MCF 10A (cell line): ENCODE measurements at regions of chr15 and their contacts with region 1.

Region 1: DNA sequence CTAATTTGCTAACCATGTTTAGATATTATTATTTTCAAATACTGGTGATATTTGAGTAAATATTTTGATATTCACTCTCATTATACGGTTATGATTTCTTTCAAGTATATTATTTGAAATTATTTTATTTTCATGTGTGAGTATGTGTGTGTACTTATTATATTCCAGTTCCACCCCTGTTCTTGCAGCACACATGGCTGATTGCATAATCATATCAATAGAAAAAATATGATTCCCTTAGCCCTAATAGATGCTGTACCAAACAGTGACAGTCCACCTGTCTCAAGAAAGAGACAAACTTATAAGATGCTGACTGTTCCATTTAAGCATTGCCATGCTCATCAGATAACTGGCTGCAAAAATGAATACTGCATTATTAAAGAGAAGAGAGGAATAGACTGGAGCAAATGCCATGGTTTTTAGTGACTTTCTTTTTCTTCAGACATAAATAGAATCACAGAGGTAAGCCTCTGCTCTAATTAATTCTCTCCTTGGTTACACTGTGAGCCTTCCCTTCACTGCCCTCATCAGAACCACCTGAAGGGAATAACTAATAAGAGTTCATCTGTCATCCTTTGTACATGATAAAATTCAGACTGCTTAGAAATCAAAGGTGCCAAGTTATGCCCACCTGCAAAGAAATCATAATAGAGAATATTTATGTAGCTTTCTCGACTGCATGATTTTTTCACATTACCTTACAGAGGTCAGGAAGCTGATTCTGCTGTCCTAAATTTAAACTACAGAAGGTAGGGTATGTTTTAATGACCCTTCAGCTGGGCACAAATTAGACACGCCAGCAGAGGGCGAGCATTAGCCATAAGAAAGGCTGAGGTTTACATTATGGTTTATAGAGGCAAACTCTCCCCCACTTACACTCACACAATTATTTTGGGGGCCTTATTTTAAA is 15.7 kb upstream of the UNC13C start:
- DNase-seq: peak; percentile 50
- H3K4me3 Mint-ChIP-seq: no peak overlapping the region
- H3K27ac Mint-ChIP-seq: no peak overlapping the region
- H3K4me1 Mint-ChIP-seq: no peaks in the 10 kb centered on the region
- H3K27me3 Mint-ChIP-seq: peaks cover 60% of the 10 kb centered on the region
- CTCF ChIP-seq: peak; percentile 67

Region 2: DNA sequence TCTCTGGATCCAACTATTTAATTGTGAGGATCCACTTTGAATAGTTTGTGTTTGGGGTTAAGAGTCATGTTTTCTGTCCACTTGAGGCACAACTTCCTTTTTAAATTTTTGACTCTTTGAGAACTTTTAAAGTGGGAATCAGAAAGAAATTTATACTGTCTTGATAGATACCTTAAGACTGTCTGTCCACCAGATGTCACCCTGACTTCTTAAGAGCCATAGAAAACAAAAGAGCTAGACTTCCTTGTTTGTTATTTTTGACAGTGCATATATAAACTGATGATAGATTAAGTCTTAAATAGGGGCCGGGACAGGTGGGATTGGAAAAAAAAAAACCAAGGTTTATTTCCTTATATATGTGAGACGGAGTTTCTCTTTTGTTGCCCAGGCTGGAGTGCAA is 151.1 kb before region 1 on chr15:
- CTCF ChIA-PET with region 1: interaction called, 4 read pairs
- POLR2A ChIA-PET with region 1: no interaction called
- intact Hi-C with region 1: loop called (anchors 5 kb)
- DNase-seq: peak; percentile 34
- H3K4me3 Mint-ChIP-seq: no peak overlapping the region
- H3K27ac Mint-ChIP-seq: no peak overlapping the region
- H3K4me1 Mint-ChIP-seq: peaks cover 4% of the 10 kb centered on the region
- H3K27me3 Mint-ChIP-seq: peaks cover 70% of the 10 kb centered on the region
- CTCF ChIP-seq: peak; percentile 21

Region 3: GRCh38 chr15:53976844-53977392 is 14.3 kb after region 1 on chr15:
- CTCF ChIA-PET with region 1: interaction called, 27 read pairs
- POLR2A ChIA-PET with region 1: no interaction called
- intact Hi-C with region 1: no loop called
- DNase-seq: peak; percentile 12
- H3K4me3 Mint-ChIP-seq: no peak overlapping the region
- H3K27ac Mint-ChIP-seq: no peak overlapping the region
- H3K4me1 Mint-ChIP-seq: no peaks in the 10 kb centered on the region
- H3K27me3 Mint-ChIP-seq: peaks cover 73% of the 10 kb centered on the region
- CTCF ChIP-seq: peak; percentile 21

Region 4: GRCh38 chr15:55108858-55109518 is 1146.4 kb after region 1 on chr15:
- CTCF ChIA-PET with region 1: interaction called, 4 read pairs
- POLR2A ChIA-PET with region 1: no interaction called
- intact Hi-C with region 1: loop called (anchors 2 kb)
- DNase-seq: peak; percentile 55
- H3K4me3 Mint-ChIP-seq: no peak overlapping the region
- H3K27ac Mint-ChIP-seq: no peak overlapping the region
- H3K4me1 Mint-ChIP-seq: peaks cover 4% of the 10 kb centered on the region
- H3K27me3 Mint-ChIP-seq: peaks cover under 1% of the 10 kb centered on the region
- CTCF ChIP-seq: peak; percentile 69

Region 5: DNA sequence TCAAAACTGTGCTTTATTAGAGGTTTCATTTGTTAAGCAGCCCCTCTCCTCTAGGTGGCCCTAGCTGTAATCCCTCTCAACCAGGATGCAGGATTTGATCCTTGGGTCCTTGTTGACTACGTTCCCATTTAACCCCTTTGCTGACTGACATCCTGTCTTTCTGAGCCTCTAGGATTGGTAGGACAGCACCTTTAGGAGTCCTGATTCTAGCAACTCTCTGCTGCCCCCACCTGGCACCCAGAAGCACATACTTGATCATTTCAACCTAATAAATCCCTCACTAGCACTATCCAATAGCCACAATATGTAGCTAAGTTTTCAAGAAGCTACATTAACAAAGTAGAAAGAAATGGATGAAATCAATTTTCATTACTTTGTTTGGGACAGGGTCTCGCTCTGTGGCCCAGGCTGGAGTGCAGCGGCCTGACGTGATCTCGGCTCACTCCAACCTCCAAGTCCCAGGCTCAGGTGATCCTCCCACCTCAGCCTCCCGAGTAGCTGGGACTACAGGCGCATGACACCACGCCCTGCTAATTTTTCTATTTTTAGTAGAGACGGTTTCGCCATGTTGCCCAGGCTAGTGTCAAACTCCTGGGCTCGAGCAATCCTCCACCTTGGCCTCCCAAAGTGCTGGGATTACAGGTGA is 1205.9 kb after region 1 on chr15:
- CTCF ChIA-PET with region 1: interaction called, 11 read pairs
- POLR2A ChIA-PET with region 1: no interaction called
- intact Hi-C with region 1: loop called (anchors 1 kb)
- DNase-seq: peak; percentile 77
- H3K4me3 Mint-ChIP-seq: no peak overlapping the region
- H3K27ac Mint-ChIP-seq: no peak overlapping the region
- H3K4me1 Mint-ChIP-seq: no peaks in the 10 kb centered on the region
- H3K27me3 Mint-ChIP-seq: no peaks in the 10 kb centered on the region
- CTCF ChIP-seq: peak; percentile 68

Region 6: DNA sequence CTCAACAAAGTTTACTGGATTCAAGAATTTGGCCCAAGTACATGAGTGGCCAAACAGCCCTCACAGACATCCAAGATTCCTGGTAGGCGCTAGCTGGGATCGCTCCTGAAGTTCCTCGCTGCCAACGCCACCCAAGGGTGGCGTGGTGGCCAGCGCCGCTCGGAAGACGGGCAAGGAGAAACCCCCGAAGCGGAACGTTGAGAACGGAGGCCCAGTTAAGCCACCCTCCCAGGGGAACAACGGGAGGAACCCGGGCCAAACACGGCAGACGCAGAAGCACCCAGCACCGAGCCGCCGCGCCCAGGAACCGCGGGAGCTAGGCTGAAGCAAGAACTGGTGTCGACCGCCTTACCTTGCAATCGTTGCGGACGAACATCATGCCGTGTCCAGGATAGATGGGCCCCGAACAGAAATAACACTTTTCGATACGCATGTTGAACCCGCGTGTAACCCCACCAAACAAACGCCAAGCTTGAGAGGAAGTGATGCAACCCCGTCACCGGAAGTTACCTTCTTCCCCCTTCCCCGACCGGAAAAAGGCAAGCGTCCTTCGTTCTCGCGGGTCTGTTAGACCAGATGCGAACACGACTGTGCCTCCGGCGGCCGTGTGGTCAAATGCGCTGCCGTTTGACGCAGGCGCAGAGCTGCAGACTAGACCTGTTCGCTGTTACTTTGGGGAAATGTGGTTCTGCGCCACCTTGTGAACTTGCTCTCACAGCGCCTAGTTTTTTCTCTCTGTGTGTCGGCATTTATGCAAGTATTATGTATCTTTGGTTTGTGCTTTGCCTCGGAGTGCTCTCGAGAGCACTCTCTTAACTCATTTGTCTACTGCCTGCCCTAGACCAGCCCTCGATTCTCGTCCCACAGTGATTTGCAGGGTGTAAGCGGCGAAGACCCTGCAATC is 1234.1 kb after region 1 on chr15 and contains the start of gene RSL24D1:
- CTCF ChIA-PET with region 1: interaction called, 12 read pairs
- POLR2A ChIA-PET with region 1: interaction called, 3 read pairs
- intact Hi-C with region 1: no loop called
- DNase-seq: peak; percentile 99
- H3K4me3 Mint-ChIP-seq: no peak within 1 kb of the TSS
- H3K27ac Mint-ChIP-seq: no peak within 1 kb of the TSS
- H3K4me1 Mint-ChIP-seq: peaks cover 18% of the 10 kb centered on the region
- H3K27me3 Mint-ChIP-seq: no peaks in the 10 kb centered on the region
- CTCF ChIP-seq: peak; percentile 22
- total RNA-seq, gene RSL24D1: 162 and 167 TPM in 2 replicates

Region 7: DNA sequence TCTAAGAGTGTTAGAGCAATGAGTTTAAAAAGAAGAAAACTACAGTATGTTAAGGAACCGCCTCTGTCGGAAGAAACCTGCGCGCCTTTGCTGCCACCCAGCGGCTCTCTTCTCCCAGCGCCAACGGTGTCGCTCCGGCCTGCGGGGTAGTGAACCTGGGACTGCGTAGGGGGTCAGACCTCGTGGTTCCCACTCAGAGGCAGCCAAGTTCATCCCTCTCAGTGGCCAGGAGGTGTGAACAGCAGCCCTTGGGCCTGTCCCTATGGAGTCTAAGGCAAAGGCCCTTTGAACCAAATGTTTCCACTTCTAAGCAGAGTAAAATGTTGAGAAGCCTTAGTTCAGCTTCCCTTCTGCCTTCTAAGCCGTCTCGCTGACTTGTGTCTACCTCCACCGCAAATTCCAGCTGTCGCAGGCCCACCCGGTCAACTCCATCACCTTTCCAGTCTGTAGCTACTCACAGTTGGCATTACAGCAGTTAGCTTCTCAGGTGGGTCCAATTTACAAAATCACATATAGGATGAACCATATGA is 1328.0 kb after region 1 on chr15:
- CTCF ChIA-PET with region 1: no interaction called
- POLR2A ChIA-PET with region 1: no interaction called
- intact Hi-C with region 1: loop called (anchors 2 kb)
- DNase-seq: peak; percentile 84
- H3K4me3 Mint-ChIP-seq: peak overlapping the region; percentile 89
- H3K27ac Mint-ChIP-seq: peak overlapping the region; percentile 92
- H3K4me1 Mint-ChIP-seq: peaks cover 15% of the 10 kb centered on the region
- H3K27me3 Mint-ChIP-seq: no peaks in the 10 kb centered on the region
- CTCF ChIP-seq: peak; percentile 84